ENCODE measurements at regions of chr20 and their contacts with region 1.

Region 1: GRCh38 chr20:36770680-36771079 is 2.9 kb downstream of the DSN1 start:
- DNase-seq: no peak

Region 2: GRCh38 chr20:35129647-35130069 is 1641.0 kb before region 1 on chr20:
- intact Hi-C with region 1: no loop called
- DNase-seq: no peak

Region 3: GRCh38 chr20:36439040-36439730 is 331.5 kb before region 1 on chr20:
- intact Hi-C with region 1: no loop called
- DNase-seq: peak; percentile 89

Region 4: GRCh38 chr20:36728986-36729385 is 41.7 kb before region 1 on chr20:
- intact Hi-C with region 1: loop called in 1 of 2 experiments (anchors 1 kb)
- DNase-seq: no peak